B cell (primary cell): ENCODE measurements at regions of chr7 and their contacts with region 1.

Region 1: GRCh38 chr7:2451171-2452073 is 24.8 kb downstream of the GRIFIN start:
- DNase-seq: peak; percentile 83
- ATAC-seq: peak; percentile 96
- H3K4me3 ChIP-seq: peak overlapping the region in 4 of 5 experiments; percentile 34 to 56 (median 50)
- H3K4me3 Mint-ChIP-seq: peak overlapping the region; percentile 80
- H3K27ac ChIP-seq: no peak overlapping the region
- H3K27ac Mint-ChIP-seq: peak overlapping the region; percentile 26
- H3K4me1 ChIP-seq: peaks cover 8 to 11% of the 10 kb centered on the region in 2 donors
- H3K4me1 Mint-ChIP-seq: peaks cover 10% of the 10 kb centered on the region
- H3K27me3 ChIP-seq: no peaks in the 10 kb centered on the region
- H3K27me3 Mint-ChIP-seq: no peaks in the 10 kb centered on the region
- CTCF ChIP-seq: peak; percentile 91

Region 2: DNA sequence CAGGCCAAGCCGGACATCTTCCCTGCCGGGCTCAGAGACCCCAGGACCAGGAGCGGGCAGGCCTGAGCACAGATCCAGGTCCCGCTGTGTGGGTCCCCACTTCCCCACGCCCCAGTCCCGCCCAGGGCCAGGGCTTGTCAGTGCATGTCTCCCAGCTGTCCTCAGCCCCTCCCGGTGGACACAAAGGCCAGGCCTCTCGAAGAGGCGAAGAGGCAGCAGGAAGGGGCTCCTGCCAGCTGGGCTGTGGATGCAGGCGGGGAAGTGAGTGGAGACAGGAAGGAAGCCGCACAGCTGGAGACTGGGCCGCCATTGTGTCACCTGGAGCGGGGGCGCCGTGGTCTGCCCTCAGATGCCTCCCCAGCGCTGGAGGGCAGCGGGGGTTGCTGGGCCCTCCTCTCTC is 20.0 kb after region 1 on chr7:
- CTCF ChIA-PET with region 1: interaction called, 104 read pairs
- POLR2A ChIA-PET with region 1: no interaction called
- intact Hi-C with region 1: loop called (anchors 1 kb)
- DNase-seq: no peak
- ATAC-seq: no peak
- H3K4me3 ChIP-seq: no peak overlapping the region
- H3K4me3 Mint-ChIP-seq: no peak overlapping the region
- H3K27ac ChIP-seq: no peak overlapping the region
- H3K27ac Mint-ChIP-seq: no peak overlapping the region
- H3K4me1 ChIP-seq: peaks cover 0 to 5% of the 10 kb centered on the region in 2 donors
- H3K4me1 Mint-ChIP-seq: peaks cover 4% of the 10 kb centered on the region
- H3K27me3 ChIP-seq: peaks cover 0 to 12% (median 2%) of the 10 kb centered on the region in 4 experiments
- H3K27me3 Mint-ChIP-seq: peaks cover 9% of the 10 kb centered on the region
- CTCF ChIP-seq: no peak

Region 3: DNA sequence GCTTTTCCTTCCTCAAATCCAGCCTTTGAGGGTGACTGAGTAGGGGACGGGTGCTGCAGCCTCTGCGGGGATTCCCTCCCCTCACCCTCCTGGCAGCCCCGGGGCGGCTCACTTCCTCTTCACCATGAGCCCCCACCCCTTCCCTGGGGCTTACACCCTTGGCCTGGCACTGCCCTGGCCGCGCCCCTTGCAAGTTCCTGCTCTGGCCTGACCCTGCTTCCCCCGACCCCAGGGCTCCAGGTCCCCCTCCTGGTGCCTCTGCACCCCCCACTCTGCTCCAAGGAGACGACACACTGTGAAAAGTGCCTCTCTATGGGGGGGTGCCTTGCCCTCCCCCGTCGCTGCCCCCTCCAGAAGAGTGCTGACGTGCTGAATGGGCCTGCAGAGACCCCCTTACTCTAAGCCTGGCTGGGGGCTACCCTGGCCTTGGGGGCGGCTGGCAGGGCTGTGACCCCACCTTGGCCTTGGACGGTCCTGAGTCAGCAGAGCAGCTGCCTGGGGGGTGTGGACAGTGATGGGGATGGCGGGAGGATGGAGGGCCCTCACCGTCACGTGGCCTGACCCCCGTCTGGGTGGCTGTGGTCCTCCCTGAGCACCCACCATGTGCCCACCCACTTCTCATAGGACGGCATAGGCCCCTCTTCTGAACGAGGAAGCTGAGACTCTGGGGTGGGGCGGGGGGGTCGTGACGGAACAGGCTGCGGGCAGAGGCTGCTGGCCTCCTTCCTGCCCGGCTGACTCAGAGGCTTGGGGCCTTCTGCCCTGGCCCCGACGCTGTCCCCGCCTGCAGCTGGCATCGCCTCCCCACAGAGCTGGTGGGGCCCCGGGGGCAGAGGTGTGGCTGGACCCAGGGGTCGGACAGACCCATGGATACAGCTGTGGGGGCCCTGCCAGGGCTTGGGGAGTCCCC is 78.0 kb after region 1 on chr7:
- CTCF ChIA-PET with region 1: interaction called, 10 read pairs
- POLR2A ChIA-PET with region 1: interaction called, 4 read pairs
- intact Hi-C with region 1: no loop called
- DNase-seq: peak; percentile 94
- ATAC-seq: peak; percentile 65
- H3K4me3 ChIP-seq: peak overlapping the region in 4 of 5 experiments; percentile 38 to 52 (median 43)
- H3K4me3 Mint-ChIP-seq: peak overlapping the region; percentile 90
- H3K27ac ChIP-seq: peak overlapping the region; percentile 97
- H3K27ac Mint-ChIP-seq: peak overlapping the region; percentile 99
- H3K4me1 ChIP-seq: peaks cover 66 to 74% of the 10 kb centered on the region in 2 donors
- H3K4me1 Mint-ChIP-seq: peaks cover 67% of the 10 kb centered on the region
- H3K27me3 ChIP-seq: no peaks in the 10 kb centered on the region
- H3K27me3 Mint-ChIP-seq: no peaks in the 10 kb centered on the region
- CTCF ChIP-seq: no peak

Region 4: GRCh38 chr7:2670720-2671391 is 219.4 kb after region 1 on chr7:
- CTCF ChIA-PET with region 1: interaction called, 11 read pairs
- POLR2A ChIA-PET with region 1: no interaction called
- intact Hi-C with region 1: no loop called
- DNase-seq: peak; percentile 79
- ATAC-seq: peak; percentile 88
- H3K4me3 ChIP-seq: no peak overlapping the region
- H3K4me3 Mint-ChIP-seq: no peak overlapping the region
- H3K27ac ChIP-seq: no peak overlapping the region
- H3K27ac Mint-ChIP-seq: no peak overlapping the region
- H3K4me1 ChIP-seq: peaks cover 6 to 8% of the 10 kb centered on the region in 2 donors
- H3K4me1 Mint-ChIP-seq: peaks cover 6% of the 10 kb centered on the region
- H3K27me3 ChIP-seq: peaks cover 0 to 2% (median 0%) of the 10 kb centered on the region in 4 experiments
- H3K27me3 Mint-ChIP-seq: peaks cover 10% of the 10 kb centered on the region
- CTCF ChIP-seq: peak; percentile 87

Region 5: GRCh38 chr7:2720582-2721491 is 269.4 kb after region 1 on chr7:
- CTCF ChIA-PET with region 1: interaction called, 15 read pairs
- POLR2A ChIA-PET with region 1: no interaction called
- intact Hi-C with region 1: no loop called
- DNase-seq: peak; percentile 84
- ATAC-seq: peak; percentile 80
- H3K4me3 ChIP-seq: no peak overlapping the region
- H3K4me3 Mint-ChIP-seq: peak overlapping the region; percentile 31
- H3K27ac ChIP-seq: peak overlapping the region; percentile 19 to 50
- H3K27ac Mint-ChIP-seq: peak overlapping the region; percentile 80
- H3K4me1 ChIP-seq: peaks cover 42 to 57% of the 10 kb centered on the region in 2 donors
- H3K4me1 Mint-ChIP-seq: peaks cover 60% of the 10 kb centered on the region
- H3K27me3 ChIP-seq: no peaks in the 10 kb centered on the region
- H3K27me3 Mint-ChIP-seq: no peaks in the 10 kb centered on the region
- CTCF ChIP-seq: no peak

Region 6: DNA sequence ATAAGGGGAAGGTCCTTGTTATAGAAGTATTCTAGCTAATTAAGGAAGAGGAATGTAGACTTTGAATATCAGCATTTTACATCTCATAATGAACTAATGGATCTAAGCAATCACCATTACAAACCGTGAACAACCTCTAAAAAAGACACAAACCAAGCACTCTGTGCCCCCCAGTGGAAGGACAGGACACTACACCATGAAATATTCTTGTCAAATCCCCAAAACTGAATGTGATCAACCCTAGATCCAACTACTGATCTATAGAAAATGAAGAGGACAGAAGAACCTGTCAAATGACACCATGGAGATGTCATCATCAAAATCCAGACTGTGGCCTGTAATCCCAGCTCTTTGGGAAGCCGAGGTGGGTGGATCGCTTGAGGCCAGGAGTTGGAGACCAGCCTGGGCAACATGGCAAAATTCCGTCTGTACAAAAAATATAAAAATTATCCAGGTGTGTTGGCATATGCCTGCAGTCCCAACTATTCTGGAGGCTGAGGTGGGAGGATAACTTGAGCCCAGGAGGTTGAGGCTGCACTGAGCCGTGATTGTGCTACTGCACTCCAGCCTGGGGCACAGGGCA is 703.6 kb after region 1 on chr7:
- CTCF ChIA-PET with region 1: no interaction called
- POLR2A ChIA-PET with region 1: no interaction called
- intact Hi-C with region 1: loop called (anchors 10 kb)
- DNase-seq: peak; percentile 78
- ATAC-seq: peak; percentile 72
- H3K4me3 ChIP-seq: no peak overlapping the region
- H3K4me3 Mint-ChIP-seq: no peak overlapping the region
- H3K27ac ChIP-seq: no peak overlapping the region
- H3K27ac Mint-ChIP-seq: no peak overlapping the region
- H3K4me1 ChIP-seq: peaks cover 22 to 30% of the 10 kb centered on the region in 2 donors
- H3K4me1 Mint-ChIP-seq: peaks cover 33% of the 10 kb centered on the region
- H3K27me3 ChIP-seq: no peaks in the 10 kb centered on the region
- H3K27me3 Mint-ChIP-seq: peaks cover 8% of the 10 kb centered on the region
- CTCF ChIP-seq: peak; percentile 88